Endothelial cell of umbilical vein (primary cell): ENCODE measurements at regions of chr15 and their contacts with region 1.

Region 1: GRCh38 chr15:74615508-74616365 is at the start of gene CLK3:
- DNase-seq: peak; percentile 89
- H3K4me3 ChIP-seq: peak within 1 kb of the TSS; percentile 91 to 93 (median 93)
- H3K27ac ChIP-seq: peak within 1 kb of the TSS; percentile 88
- H3K4me1 ChIP-seq: peaks cover 9% of the 10 kb centered on the region
- H3K27me3 ChIP-seq: no peaks in the 10 kb centered on the region
- CTCF ChIP-seq: no peak
- POLR2A ChIP-seq: peak; percentile 77
- total RNA-seq, gene CLK3: 69.2 and 75.5 TPM in 2 replicates

Region 2: GRCh38 chr15:74460871-74461846 is 154.6 kb before region 1 on chr15 and contains the start of gene UBL7:
- CTCF ChIA-PET with region 1: interaction called, 3 read pairs
- POLR2A ChIA-PET with region 1: interaction called, 3 read pairs
- dilution Hi-C with region 1: no loop called
- intact Hi-C with region 1: loop called (anchors 2 kb)
- DNase-seq: peak; percentile 98
- H3K4me3 ChIP-seq: peak within 1 kb of the TSS; percentile 61 to 71 (median 69)
- H3K27ac ChIP-seq: peak within 1 kb of the TSS; percentile 80
- H3K4me1 ChIP-seq: peaks cover 9% of the 10 kb centered on the region
- H3K27me3 ChIP-seq: no peaks in the 10 kb centered on the region
- CTCF ChIP-seq: peak in 1 of 2 donors; percentile 25
- POLR2A ChIP-seq: peak; percentile 97
- total RNA-seq, gene UBL7: 31.9 and 32.8 TPM in 2 replicates

Region 3: DNA sequence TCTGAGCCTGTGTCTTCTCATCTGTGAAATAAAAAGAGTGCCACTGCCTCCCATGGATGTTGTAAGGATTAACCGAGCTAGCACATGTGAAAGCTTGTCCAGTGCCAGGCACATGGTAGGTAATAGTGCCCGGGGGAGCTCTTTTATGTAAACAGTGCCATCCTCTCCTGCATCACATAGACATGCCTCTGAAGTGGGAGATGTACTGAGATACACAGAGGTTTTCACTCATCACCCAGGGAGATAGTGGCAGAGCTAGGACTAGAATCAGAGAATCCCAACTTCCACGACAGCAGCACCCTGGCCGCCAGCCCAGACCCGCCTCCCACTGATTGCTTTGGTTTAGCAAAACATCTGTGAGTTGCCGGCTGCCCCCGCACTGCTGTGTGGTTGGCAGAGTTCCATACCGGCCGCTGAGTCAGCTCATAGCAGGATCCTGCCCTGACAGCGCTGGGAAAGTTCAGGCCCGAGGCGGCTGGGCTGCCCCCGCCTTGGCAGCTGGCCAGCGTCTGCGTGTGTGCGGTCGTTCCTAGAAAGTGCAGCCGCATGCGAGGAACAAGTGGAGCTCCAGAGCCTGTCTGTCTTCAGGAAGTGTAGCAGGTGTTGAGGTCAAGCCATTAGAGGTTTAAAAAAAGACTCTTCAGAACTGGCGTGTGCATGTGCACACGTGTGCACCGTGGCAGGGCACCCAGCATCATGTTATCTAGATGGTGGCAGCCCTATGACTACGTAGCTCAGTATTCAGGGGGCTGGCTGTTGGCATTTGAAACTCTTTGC is 69.7 kb before region 1 on chr15:
- CTCF ChIA-PET with region 1: interaction called, 5 read pairs
- POLR2A ChIA-PET with region 1: interaction called, 8 read pairs
- dilution Hi-C with region 1: no loop called
- intact Hi-C with region 1: loop called (anchors 1 kb)
- DNase-seq: peak; percentile 99
- H3K4me3 ChIP-seq: no peak overlapping the region
- H3K27ac ChIP-seq: no peak overlapping the region
- H3K4me1 ChIP-seq: peaks cover 19% of the 10 kb centered on the region
- H3K27me3 ChIP-seq: no peaks in the 10 kb centered on the region
- CTCF ChIP-seq: no peak
- POLR2A ChIP-seq: peak; percentile 39

Region 4: DNA sequence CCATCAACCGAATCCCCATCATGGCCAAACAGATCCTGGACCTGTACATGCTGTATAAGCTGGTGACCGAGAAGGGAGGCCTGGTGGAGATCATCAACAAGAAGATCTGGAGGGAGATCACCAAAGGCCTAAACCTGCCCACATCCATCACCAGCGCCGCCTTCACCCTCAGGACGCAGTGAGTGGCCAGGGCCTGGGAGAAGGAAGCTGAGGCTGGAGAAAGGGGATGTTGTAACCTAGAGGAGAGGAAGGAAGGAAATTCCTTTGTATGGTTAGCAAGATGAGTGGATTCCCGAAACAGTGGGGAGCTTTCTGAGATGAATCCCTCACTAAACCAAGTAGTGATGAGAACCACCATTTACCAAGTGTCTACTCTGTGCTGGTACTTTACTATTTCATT is 25.9 kb before region 1 on chr15:
- CTCF ChIA-PET with region 1: no interaction called
- POLR2A ChIA-PET with region 1: no interaction called
- dilution Hi-C with region 1: no loop called
- intact Hi-C with region 1: loop called (anchors 2 kb)
- DNase-seq: peak; percentile 36
- H3K4me3 ChIP-seq: no peak overlapping the region
- H3K27ac ChIP-seq: peak overlapping the region; percentile 73
- H3K4me1 ChIP-seq: peaks cover 24% of the 10 kb centered on the region
- H3K27me3 ChIP-seq: no peaks in the 10 kb centered on the region
- CTCF ChIP-seq: no peak
- POLR2A ChIP-seq: no peak

Region 5: DNA sequence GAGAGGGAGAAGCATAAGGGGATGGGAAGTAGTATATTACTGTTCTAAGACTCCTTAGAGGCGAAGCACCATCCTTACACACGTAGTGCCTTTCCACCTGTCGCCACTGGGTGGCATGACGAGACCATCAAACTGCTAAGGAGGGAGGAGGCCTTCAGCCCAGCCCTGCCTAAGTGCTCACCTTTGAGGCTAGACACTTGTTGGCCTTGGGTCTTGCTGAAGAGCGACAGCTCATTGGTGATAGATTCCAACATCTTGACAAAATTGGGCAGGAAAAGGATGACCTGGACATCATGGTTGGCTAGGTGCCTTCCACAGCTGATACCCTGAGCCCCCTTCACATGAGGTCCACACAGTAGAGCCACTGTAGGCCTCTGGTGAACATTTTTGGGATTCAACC is 19.5 kb after region 1 on chr15:
- CTCF ChIA-PET with region 1: interaction called, 82 read pairs
- POLR2A ChIA-PET with region 1: no interaction called
- dilution Hi-C with region 1: no loop called
- intact Hi-C with region 1: no loop called
- DNase-seq: peak; percentile 76
- H3K4me3 ChIP-seq: no peak overlapping the region
- H3K27ac ChIP-seq: no peak overlapping the region
- H3K4me1 ChIP-seq: no peaks in the 10 kb centered on the region
- H3K27me3 ChIP-seq: no peaks in the 10 kb centered on the region
- CTCF ChIP-seq: peak; percentile 82 to 89
- POLR2A ChIP-seq: no peak